CD8-positive, alpha-beta T cell (primary cell): ENCODE measurements at regions of chr15 and their contacts with region 1.

Region 1: GRCh38 chr15:85044251-85044853 is 62.7 kb downstream of the PDE8A start:
- DNase-seq: peak in 8 of 9 experiments; percentile 17 to 70 (median 54)
- ATAC-seq: peak; percentile 58
- H3K4me3 ChIP-seq: no peak overlapping the region
- H3K4me3 Mint-ChIP-seq: no peak overlapping the region
- H3K27ac ChIP-seq: no peak overlapping the region
- H3K27ac Mint-ChIP-seq: no peak overlapping the region
- H3K4me1 ChIP-seq: peaks cover 18% of the 10 kb centered on the region
- H3K4me1 Mint-ChIP-seq: peaks cover 26% of the 10 kb centered on the region
- H3K27me3 ChIP-seq: no peaks in the 10 kb centered on the region
- H3K27me3 Mint-ChIP-seq: no peaks in the 10 kb centered on the region
- CTCF ChIP-seq: peak; percentile 60

Region 2: GRCh38 chr15:84844964-84845363 is 199.4 kb before region 1 on chr15:
- CTCF ChIA-PET with region 1: interaction called, 7 read pairs
- POLR2A ChIA-PET with region 1: no interaction called
- intact Hi-C with region 1: loop called in 1 of 2 experiments (anchors 5 kb)
- DNase-seq: no peak
- ATAC-seq: no peak
- H3K4me3 ChIP-seq: no peak overlapping the region
- H3K4me3 Mint-ChIP-seq: no peak overlapping the region
- H3K27ac ChIP-seq: no peak overlapping the region
- H3K27ac Mint-ChIP-seq: no peak overlapping the region
- H3K4me1 ChIP-seq: no peaks in the 10 kb centered on the region
- H3K4me1 Mint-ChIP-seq: no peaks in the 10 kb centered on the region
- H3K27me3 ChIP-seq: peaks cover 0 to 2% of the 10 kb centered on the region in 2 experiments
- H3K27me3 Mint-ChIP-seq: no peaks in the 10 kb centered on the region
- CTCF ChIP-seq: no peak

Region 3: GRCh38 chr15:84929744-84930371 is 114.5 kb before region 1 on chr15:
- CTCF ChIA-PET with region 1: interaction called, 3 read pairs
- POLR2A ChIA-PET with region 1: no interaction called
- intact Hi-C with region 1: loop called in 1 of 2 experiments (anchors 1 kb)
- DNase-seq: no peak
- ATAC-seq: no peak
- H3K4me3 ChIP-seq: no peak overlapping the region
- H3K4me3 Mint-ChIP-seq: no peak overlapping the region
- H3K27ac ChIP-seq: no peak overlapping the region
- H3K27ac Mint-ChIP-seq: no peak overlapping the region
- H3K4me1 ChIP-seq: no peaks in the 10 kb centered on the region
- H3K4me1 Mint-ChIP-seq: peaks cover 5% of the 10 kb centered on the region
- H3K27me3 ChIP-seq: no peaks in the 10 kb centered on the region
- H3K27me3 Mint-ChIP-seq: no peaks in the 10 kb centered on the region
- CTCF ChIP-seq: no peak

Region 4: GRCh38 chr15:84955089-84955848 is 89.1 kb before region 1 on chr15:
- CTCF ChIA-PET with region 1: interaction called, 46 read pairs
- POLR2A ChIA-PET with region 1: no interaction called
- intact Hi-C with region 1: loop called in 1 of 2 experiments (anchors 1 kb)
- DNase-seq: peak in 8 of 9 experiments; percentile 5 to 60 (median 48)
- ATAC-seq: peak; percentile 49
- H3K4me3 ChIP-seq: no peak overlapping the region
- H3K4me3 Mint-ChIP-seq: no peak overlapping the region
- H3K27ac ChIP-seq: no peak overlapping the region
- H3K27ac Mint-ChIP-seq: no peak overlapping the region
- H3K4me1 ChIP-seq: no peaks in the 10 kb centered on the region
- H3K4me1 Mint-ChIP-seq: peaks cover 8% of the 10 kb centered on the region
- H3K27me3 ChIP-seq: no peaks in the 10 kb centered on the region
- H3K27me3 Mint-ChIP-seq: peaks cover 12% of the 10 kb centered on the region
- CTCF ChIP-seq: peak; percentile 61

Region 5: DNA sequence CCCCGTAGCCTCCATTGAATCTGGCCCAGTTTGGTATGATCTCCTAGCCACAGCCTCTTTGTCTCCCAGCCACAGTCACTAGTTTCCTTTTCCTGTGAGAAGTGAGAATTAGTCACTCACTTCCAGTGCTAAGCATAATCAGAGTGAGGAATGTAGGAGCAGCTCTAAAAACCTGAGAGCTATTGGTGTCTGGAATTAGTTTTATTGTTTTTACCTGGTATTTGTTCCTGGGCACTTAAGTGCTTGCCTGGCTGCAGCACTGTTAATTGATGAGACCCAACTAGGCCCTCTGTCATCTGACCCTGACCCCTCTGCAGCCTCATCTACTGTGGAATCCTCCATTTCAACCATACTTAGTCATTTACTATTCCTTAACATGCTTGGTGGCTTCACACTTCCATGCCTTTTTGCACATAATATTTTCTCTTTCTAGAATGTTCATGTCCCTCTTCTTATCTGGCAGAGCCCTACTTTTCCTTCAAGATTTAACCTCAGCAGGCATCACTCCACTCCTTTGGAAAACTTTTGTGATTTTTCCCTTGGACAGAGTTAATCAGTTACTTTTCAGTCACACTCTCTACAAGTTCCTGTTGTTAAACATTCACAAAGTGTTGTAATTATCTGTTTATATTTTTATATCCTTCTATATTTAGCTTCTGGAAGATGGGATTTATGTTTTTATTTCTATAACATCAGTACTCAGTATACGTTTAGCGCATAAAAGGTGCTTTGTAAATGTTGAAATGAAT is 13.9 kb before region 1 on chr15:
- CTCF ChIA-PET with region 1: interaction called, 11 read pairs
- POLR2A ChIA-PET with region 1: interaction called, 3 read pairs
- intact Hi-C with region 1: loop called in 1 of 2 experiments (anchors 2 kb)
- DNase-seq: peak in 2 of 9 experiments; percentile 34 to 40
- ATAC-seq: peak; percentile 69
- H3K4me3 ChIP-seq: no peak overlapping the region
- H3K4me3 Mint-ChIP-seq: no peak overlapping the region
- H3K27ac ChIP-seq: no peak overlapping the region
- H3K27ac Mint-ChIP-seq: peak overlapping the region; percentile 19
- H3K4me1 ChIP-seq: peaks cover 43% of the 10 kb centered on the region
- H3K4me1 Mint-ChIP-seq: peaks cover 49% of the 10 kb centered on the region
- H3K27me3 ChIP-seq: no peaks in the 10 kb centered on the region
- H3K27me3 Mint-ChIP-seq: no peaks in the 10 kb centered on the region
- CTCF ChIP-seq: no peak